Endothelial cell of umbilical vein (primary cell): ENCODE measurements at regions of chr11 and their contacts with region 1.

Region 1: GRCh38 chr11:44911029-44911814 is 39.5 kb downstream of the TP53I11 start:
- DNase-seq: peak; percentile 80
- H3K4me3 ChIP-seq: no peak overlapping the region
- H3K27ac ChIP-seq: no peak overlapping the region
- H3K4me1 ChIP-seq: peaks cover 2% of the 10 kb centered on the region
- H3K27me3 ChIP-seq: no peaks in the 10 kb centered on the region
- CTCF ChIP-seq: peak; percentile 73 to 88
- POLR2A ChIP-seq: no peak

Region 2: GRCh38 chr11:44556735-44557409 is 354.4 kb before region 1 on chr11:
- CTCF ChIA-PET with region 1: interaction called, 10 read pairs
- POLR2A ChIA-PET with region 1: no interaction called
- dilution Hi-C with region 1: no loop called
- intact Hi-C with region 1: loop called (anchors 2 kb)
- DNase-seq: peak; percentile 61
- H3K4me3 ChIP-seq: no peak overlapping the region
- H3K27ac ChIP-seq: no peak overlapping the region
- H3K4me1 ChIP-seq: no peaks in the 10 kb centered on the region
- H3K27me3 ChIP-seq: peaks cover 2 to 4% of the 10 kb centered on the region in 2 experiments
- CTCF ChIP-seq: peak; percentile 51 to 76
- POLR2A ChIP-seq: no peak

Region 3: DNA sequence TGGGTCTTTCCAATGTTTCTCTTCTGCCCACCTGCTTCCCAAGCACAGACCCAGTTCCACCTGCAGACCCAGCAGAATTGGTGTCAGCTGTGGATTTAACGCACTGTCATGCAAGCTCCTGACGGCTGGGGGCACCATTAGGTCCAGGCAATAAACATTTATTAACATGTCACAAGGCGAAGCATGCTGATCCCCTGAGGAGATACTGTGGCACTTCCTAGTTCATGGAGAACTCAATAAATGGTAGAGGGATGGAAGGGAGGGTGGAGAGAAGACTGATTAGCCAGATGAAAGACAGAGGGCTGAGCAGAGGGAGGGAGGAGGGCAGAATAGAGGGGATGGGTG is 252.7 kb before region 1 on chr11:
- CTCF ChIA-PET with region 1: interaction called, 29 read pairs
- POLR2A ChIA-PET with region 1: no interaction called
- dilution Hi-C with region 1: no loop called
- intact Hi-C with region 1: no loop called
- DNase-seq: peak; percentile 55
- H3K4me3 ChIP-seq: no peak overlapping the region
- H3K27ac ChIP-seq: no peak overlapping the region
- H3K4me1 ChIP-seq: no peaks in the 10 kb centered on the region
- H3K27me3 ChIP-seq: peaks cover 0 to 3% of the 10 kb centered on the region in 2 experiments
- CTCF ChIP-seq: peak; percentile 39 to 55
- POLR2A ChIP-seq: no peak

Region 4: GRCh38 chr11:44702889-44703288 is 208.3 kb before region 1 on chr11:
- CTCF ChIA-PET with region 1: no interaction called
- POLR2A ChIA-PET with region 1: no interaction called
- dilution Hi-C with region 1: no loop called
- intact Hi-C with region 1: no loop called
- DNase-seq: no peak
- H3K4me3 ChIP-seq: no peak overlapping the region
- H3K27ac ChIP-seq: no peak overlapping the region
- H3K4me1 ChIP-seq: peaks cover 9% of the 10 kb centered on the region
- H3K27me3 ChIP-seq: peaks cover 0 to 4% of the 10 kb centered on the region in 2 experiments
- CTCF ChIP-seq: no peak
- POLR2A ChIP-seq: no peak

Region 5: GRCh38 chr11:44740967-44741366 is 170.3 kb before region 1 on chr11:
- CTCF ChIA-PET with region 1: interaction called, 11 read pairs
- POLR2A ChIA-PET with region 1: no interaction called
- dilution Hi-C with region 1: no loop called
- intact Hi-C with region 1: no loop called
- DNase-seq: peak; percentile 23
- H3K4me3 ChIP-seq: no peak overlapping the region
- H3K27ac ChIP-seq: no peak overlapping the region
- H3K4me1 ChIP-seq: peaks cover 3% of the 10 kb centered on the region
- H3K27me3 ChIP-seq: no peaks in the 10 kb centered on the region
- CTCF ChIP-seq: no peak
- POLR2A ChIP-seq: no peak

Region 6: DNA sequence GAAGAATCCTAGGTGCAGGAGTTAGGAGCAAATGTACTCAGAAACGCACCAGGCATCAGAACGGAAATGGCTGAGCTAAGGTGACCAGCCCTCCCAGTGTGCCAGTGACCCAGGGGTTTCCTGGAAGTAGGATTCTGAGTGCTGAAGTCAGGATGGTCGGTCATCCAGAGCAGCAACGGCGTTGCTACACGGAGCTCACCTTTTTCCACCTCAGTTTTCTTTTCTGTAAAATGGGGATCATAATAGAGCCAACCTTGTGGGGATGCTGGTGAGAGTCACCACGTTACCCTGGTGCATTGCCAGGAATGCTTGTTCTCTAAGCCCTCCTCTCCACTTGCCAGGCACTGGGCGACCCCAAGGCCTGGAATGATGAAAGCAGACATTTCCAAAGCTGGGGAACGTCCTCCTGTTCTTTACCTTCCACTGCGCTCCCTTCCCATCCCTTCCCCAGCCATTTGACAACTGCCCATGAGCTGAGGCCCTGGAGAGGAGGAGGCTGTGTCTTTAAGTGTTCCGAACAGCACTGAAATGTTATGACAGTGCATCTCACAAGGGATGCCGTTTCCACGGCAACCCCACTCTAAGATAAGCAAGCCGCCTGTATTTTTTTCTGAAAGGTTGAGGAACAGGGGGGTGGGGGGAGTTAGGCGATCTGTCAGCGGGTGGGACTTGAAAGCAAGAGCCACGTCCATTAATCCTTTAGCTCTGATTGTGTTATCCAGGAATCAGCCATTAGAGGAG is 117.7 kb before region 1 on chr11:
- CTCF ChIA-PET with region 1: interaction called, 12 read pairs
- POLR2A ChIA-PET with region 1: no interaction called
- dilution Hi-C with region 1: no loop called
- intact Hi-C with region 1: no loop called
- DNase-seq: no peak
- H3K4me3 ChIP-seq: no peak overlapping the region
- H3K27ac ChIP-seq: no peak overlapping the region
- H3K4me1 ChIP-seq: peaks cover 15% of the 10 kb centered on the region
- H3K27me3 ChIP-seq: no peaks in the 10 kb centered on the region
- CTCF ChIP-seq: no peak
- POLR2A ChIP-seq: no peak

Region 7: DNA sequence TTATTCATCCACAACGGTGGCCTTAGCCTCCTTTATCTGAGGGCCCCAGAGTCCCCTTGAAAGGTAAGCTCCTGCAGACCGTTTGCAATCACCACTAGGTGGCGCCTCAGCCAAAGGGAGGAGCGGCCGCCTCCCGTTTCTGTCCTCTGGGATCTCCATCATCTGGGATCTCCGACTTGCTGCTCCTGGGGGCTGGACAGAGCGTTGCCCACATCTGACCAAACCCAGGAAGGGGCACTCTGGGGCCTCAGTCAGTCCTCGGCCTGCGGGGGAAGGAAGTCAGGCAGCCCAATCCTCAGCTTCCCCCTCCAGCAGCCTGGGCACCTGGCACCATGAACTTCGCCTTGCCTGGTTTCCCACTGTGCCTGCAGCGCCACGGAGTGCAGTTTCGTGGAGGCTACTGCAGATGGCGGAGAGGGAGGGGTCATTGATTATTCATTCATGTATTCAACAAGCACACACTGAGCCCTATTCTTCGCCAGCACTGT is 16.0 kb after region 1 on chr11:
- CTCF ChIA-PET with region 1: interaction called, 17 read pairs
- POLR2A ChIA-PET with region 1: no interaction called
- dilution Hi-C with region 1: no loop called
- intact Hi-C with region 1: no loop called
- DNase-seq: peak; percentile 52
- H3K4me3 ChIP-seq: no peak overlapping the region
- H3K27ac ChIP-seq: no peak overlapping the region
- H3K4me1 ChIP-seq: no peaks in the 10 kb centered on the region
- H3K27me3 ChIP-seq: no peaks in the 10 kb centered on the region
- CTCF ChIP-seq: peak; percentile 79 to 85
- POLR2A ChIP-seq: no peak

Region 8: GRCh38 chr11:45098929-45099328 is 187.7 kb after region 1 on chr11:
- CTCF ChIA-PET with region 1: no interaction called
- POLR2A ChIA-PET with region 1: no interaction called
- dilution Hi-C with region 1: no loop called
- intact Hi-C with region 1: no loop called
- DNase-seq: no peak
- H3K4me3 ChIP-seq: no peak overlapping the region
- H3K27ac ChIP-seq: no peak overlapping the region
- H3K4me1 ChIP-seq: peaks cover 7% of the 10 kb centered on the region
- H3K27me3 ChIP-seq: no peaks in the 10 kb centered on the region
- CTCF ChIP-seq: no peak
- POLR2A ChIP-seq: no peak